Heart left ventricle (tissue), 16 donors: ENCODE measurements at regions of chr14 and their contacts with region 1.

Region 1: DNA sequence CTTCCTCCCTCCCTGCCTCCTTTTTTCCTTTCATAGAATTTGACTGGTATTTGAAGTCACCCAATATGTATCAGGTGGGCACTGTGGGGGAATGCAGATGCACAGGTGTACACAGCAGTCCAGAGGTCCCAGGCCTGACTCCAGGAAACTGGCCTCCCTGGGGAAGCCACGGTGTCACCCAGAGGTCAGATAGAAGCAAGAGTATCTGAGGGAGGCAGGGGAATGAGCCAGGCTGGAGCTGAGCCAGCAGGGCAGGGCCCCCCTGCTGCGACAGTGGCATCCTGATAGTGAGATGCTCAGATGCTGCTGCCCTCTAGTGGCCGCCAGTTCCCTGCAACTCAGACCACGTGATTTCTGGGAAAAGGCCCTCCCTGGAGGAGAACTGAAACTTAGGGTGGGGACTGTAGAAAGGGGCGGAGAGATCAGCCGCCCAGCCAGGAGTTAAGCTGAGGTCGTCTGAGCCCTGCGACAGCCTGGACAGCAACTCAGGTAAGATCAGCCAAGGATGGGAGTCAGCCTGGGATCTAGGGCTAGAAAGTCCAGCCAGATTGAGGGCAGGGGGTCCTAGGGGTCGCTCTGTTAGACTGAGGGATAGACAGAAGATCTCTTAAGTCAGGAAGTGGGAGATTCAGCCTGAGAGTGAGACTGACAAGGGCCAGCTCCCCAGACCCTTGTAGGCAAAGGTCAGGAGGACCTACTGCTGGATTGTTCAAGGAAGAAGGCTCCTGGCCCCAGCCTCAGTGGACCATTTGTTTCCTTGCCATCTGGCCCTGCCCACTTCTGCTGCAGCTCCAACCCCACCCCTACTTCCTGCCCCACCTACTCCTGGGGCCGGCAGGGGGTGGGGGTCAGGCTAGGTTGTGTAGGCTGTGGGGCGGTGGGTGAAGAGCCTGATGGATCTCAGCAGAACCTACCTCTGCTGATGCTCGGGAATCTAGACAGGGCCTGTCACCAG is at the start of gene IRF9:
- DNase-seq: peak; percentile 95 to 97 (median 96)
- ATAC-seq: peak; percentile 88 to 95 (median 94)
- H3K4me3 ChIP-seq: peak within 1 kb of the TSS; percentile 36 to 85 (median 72)
- H3K27ac ChIP-seq: peak within 1 kb of the TSS; percentile 82 to 100 (median 97)
- H3K4me1 ChIP-seq: peaks cover 0 to 54% (median 22%) of the 10 kb centered on the region in 12 donors
- H3K27me3 ChIP-seq: no peaks in the 10 kb centered on the region
- CTCF ChIP-seq: peak; percentile 86 to 98 (median 93)
- POLR2A ChIP-seq: peak in 1 of 2 donors; percentile 59
- total RNA-seq, gene IRF9: 23.4 to 169 (median 29.8) TPM

Region 2: DNA sequence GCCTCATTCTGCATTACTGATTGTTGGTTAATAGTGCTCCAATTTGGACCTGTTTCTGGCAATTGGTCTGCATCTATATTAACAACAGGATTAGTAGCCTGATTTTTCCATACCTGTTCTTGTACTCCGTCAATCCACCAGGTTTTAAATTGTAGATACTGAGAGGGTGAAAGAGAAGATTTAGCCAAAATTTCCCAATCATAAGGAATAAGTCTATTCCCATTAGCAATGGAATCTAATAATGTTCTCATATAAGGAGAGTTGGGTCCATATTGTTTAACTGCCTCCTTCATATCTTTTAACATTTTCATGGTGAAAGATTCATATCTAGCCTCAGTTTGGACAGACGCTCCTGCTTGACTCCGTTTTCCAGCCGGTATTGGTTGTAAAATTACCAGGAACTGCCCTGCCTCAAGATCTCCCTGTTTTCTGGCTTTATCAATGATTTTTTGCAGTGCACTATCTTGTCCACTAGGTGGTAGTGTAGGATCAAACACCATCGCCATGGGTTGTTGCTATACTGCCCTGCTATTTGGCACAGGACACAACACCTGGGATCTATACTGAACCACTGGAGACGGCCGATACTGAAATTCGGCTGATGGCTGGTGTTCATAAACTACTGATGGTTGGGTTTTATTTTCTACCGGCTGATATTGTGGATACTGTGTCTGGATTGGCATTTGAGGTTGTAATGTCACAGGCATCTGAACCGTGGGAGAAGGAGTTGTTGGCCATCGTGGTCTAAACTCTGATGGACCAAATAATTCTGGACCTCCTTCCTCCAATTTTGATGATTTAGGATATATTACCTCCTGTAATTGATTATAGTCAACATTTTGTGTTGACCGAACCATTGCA is 147.2 kb before region 1 on chr14:
- intact Hi-C with region 1: loop called in 1 of 10 experiments (anchors 10 kb)
- DNase-seq: peak in 3 of 5 donors; percentile 29 to 43 (median 35)
- ATAC-seq: peak; percentile 73 to 83 (median 82)
- H3K4me3 ChIP-seq: no peak overlapping the region
- H3K27ac ChIP-seq: no peak overlapping the region
- H3K4me1 ChIP-seq: peaks cover 0 to 10% (median 2%) of the 10 kb centered on the region in 12 donors
- H3K27me3 ChIP-seq: no peaks in the 10 kb centered on the region
- CTCF ChIP-seq: peak; percentile 85 to 97 (median 90)
- POLR2A ChIP-seq: no peak

Region 3: DNA sequence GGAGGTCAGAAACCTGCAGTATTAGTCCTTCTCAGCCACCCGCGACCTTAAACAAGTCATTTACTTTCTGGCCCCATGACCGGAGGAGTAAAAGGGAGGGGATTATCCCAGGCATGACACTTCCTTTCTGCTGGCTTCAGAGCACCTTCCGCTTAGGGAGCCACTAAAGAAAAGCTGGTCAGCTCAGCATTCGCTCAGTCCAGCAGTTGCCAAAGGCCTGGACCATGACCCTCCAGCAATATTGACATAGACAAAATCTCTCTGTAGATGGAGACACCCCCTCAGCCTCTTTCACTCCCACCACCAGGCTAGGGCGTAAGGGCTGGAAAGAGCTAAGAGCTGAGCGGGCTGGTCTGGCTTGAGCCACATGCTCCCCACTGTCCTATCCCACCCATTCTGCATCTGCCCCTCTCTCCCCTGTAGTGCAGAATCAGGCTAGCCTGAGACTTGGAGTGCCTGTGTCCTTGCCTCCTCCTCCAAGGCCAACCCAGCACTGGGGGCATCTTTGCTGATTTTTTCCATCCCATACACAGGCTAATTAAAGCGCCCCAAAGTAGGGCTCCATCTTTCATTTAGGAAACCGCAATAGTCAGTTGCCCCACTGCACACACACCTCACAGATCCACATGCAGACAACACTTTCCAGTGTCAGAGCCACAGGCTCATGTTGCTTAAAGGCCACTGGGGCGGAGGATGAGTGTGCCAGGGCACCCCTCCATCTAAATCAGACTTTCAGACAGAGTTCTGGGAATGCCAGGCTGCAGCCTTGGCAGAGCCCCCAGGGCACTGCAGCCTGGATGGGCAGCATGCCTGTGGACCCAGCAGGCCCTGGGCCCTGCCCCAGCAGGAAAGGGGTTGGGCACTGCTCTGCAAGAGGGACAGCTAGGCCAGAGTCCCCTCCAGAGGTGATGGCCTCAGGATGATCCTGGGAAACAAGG is 93.7 kb before region 1 on chr14:
- intact Hi-C with region 1: loop called in 1 of 10 experiments (anchors 10 kb)
- DNase-seq: peak in 1 of 5 donors; percentile 18
- ATAC-seq: peak in 1 of 4 donors; percentile 29
- H3K4me3 ChIP-seq: no peak overlapping the region
- H3K27ac ChIP-seq: no peak overlapping the region
- H3K4me1 ChIP-seq: peaks cover 0 to 6% (median 0%) of the 10 kb centered on the region in 12 donors
- H3K27me3 ChIP-seq: peaks cover 0 to 10% (median 0%) of the 10 kb centered on the region in 9 donors
- CTCF ChIP-seq: no peak
- POLR2A ChIP-seq: no peak

Region 4: GRCh38 chr14:24114536-24115450 is 46.3 kb before region 1 on chr14 and contains the starts of genes DCAF11 and NRL:
- intact Hi-C with region 1: loop called in 4 of 10 experiments (anchors 1 to 5 kb)
- DNase-seq: peak; percentile 99
- ATAC-seq: peak; percentile 93 to 95 (median 94)
- H3K4me3 ChIP-seq: peak within 1 kb of the TSS; percentile 48 to 79 (median 71)
- H3K27ac ChIP-seq: peak within 1 kb of the TSS; percentile 95 to 100 (median 97)
- H3K4me1 ChIP-seq: peaks cover 0 to 31% (median 18%) of the 10 kb centered on the region in 12 donors
- H3K27me3 ChIP-seq: no peaks in the 10 kb centered on the region
- CTCF ChIP-seq: peak in 2 of 12 donors; percentile 22 to 36
- POLR2A ChIP-seq: peak in 1 of 2 donors; percentile 9
- total RNA-seq, gene DCAF11: 55.1 to 117 (median 75.0) TPM
- total RNA-seq, gene NRL: 1.3 to 2.9 (median 2.1) TPM

Region 5: GRCh38 chr14:24141097-24141880 is 19.8 kb before region 1 on chr14 and contains the start of gene EMC9:
- intact Hi-C with region 1: no loop called
- DNase-seq: peak; percentile 100
- ATAC-seq: peak; percentile 90 to 96 (median 94)
- H3K4me3 ChIP-seq: peak within 1 kb of the TSS; percentile 64 to 95 (median 72)
- H3K27ac ChIP-seq: peak within 1 kb of the TSS; percentile 59 to 96 (median 90)
- H3K4me1 ChIP-seq: peaks cover 3 to 91% (median 44%) of the 10 kb centered on the region in 12 donors
- H3K27me3 ChIP-seq: no peaks in the 10 kb centered on the region
- CTCF ChIP-seq: peak; percentile 26 to 75 (median 57)
- POLR2A ChIP-seq: peak in 1 of 2 donors; percentile 94
- total RNA-seq, gene EMC9: 9.6 to 18.7 (median 13.8) TPM

Region 6: DNA sequence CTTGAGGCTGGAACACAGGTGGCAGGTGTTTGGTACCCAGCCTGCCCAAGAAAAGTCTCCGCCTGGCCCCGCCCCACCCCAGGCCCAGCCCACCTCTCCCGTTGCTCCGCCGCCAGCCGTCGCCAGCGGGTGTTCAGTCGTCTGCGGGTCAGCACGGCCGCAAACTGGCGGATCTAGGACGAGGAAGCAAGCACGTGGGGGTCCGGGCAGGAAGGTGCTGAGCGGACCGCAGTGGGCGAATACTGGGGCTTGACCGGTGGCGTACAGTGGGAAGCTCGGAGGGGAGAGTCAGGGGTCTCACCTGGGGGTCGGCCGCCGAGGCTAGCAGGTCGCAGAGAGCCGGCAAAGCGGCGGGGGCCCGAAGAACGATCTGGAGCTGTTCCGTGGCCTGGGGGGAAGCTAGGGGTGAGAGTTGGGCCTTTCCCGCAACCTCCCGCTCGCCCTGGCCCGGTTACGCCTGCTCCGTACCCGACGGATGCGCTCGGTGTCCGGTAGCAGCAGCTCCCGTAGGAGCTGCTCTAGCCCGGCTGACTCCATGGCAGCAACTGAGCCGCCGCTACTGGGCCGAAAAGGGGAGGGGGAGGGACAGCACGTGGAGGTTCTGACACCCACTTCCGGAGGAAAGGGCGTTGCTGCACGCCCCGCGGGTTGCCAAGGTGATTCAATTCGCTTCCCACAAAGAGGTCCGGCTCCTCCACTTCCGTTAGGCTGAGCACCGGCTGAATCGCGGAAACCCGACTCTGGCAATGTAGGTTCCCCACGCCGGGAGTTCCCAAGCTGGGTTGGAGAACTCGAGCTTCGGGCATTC is 27.3 kb after region 1 on chr14 and contains the start of gene IPO4:
- intact Hi-C with region 1: loop called in 1 of 10 experiments (anchors 1 kb)
- DNase-seq: peak; percentile 96 to 98 (median 97)
- ATAC-seq: peak; percentile 92 to 98 (median 94)
- H3K4me3 ChIP-seq: peak within 1 kb of the TSS; percentile 48 to 83 (median 69)
- H3K27ac ChIP-seq: peak within 1 kb of the TSS in 11 of 12 donors; percentile 41 to 80 (median 67)
- H3K4me1 ChIP-seq: peaks cover 0 to 24% (median 14%) of the 10 kb centered on the region in 12 donors
- H3K27me3 ChIP-seq: no peaks in the 10 kb centered on the region
- CTCF ChIP-seq: no peak
- POLR2A ChIP-seq: peak in 1 of 2 donors; percentile 45
- total RNA-seq, gene IPO4: 9.1 to 25.6 (median 17.2) TPM

Region 7: DNA sequence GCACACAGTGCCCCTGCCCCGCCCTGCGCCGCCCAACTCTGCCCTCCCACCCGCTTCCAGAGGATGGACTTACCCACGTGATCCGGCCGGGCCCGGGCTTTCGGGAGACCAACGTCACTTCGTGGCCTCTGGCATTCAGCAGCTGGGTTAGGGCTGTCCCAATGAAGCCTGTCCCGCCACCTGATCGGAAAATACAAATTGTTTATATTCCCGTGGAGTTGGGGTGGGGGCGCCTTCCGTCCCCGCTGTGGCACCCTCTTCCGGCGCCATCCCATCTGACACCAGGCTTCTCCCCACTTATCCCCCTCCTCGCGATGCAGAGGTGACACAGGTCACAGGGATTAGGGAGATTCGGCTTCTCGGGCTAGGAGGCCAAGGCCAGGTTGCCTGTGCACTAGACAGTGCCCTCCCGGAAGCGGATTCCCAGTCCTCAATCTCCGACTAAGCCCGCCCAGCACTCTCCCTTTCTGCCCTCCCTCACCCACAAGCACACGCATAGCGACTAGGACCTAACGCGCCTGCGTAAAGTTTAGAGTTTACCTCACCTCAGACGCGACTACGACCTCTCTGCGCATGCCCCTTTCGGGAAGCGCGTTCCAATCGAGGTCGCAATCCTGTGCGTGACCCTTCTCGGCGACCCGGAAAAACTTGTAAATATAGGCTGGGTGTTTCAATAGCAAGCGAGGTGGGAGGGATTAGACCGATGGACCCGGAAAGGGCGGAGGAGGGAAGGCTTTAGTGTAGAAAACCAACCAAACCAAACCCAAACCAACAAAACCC is 281.3 kb after region 1 on chr14 and contains the start of gene SDR39U1:
- intact Hi-C with region 1: no loop called
- DNase-seq: peak; percentile 97 to 98 (median 98)
- ATAC-seq: peak; percentile 93 to 96 (median 95)
- H3K4me3 ChIP-seq: peak within 1 kb of the TSS; percentile 24 to 89 (median 74)
- H3K27ac ChIP-seq: peak within 1 kb of the TSS; percentile 94 to 100 (median 98)
- H3K4me1 ChIP-seq: peaks cover 0 to 49% (median 38%) of the 10 kb centered on the region in 12 donors
- H3K27me3 ChIP-seq: no peaks in the 10 kb centered on the region
- CTCF ChIP-seq: peak in 2 of 12 donors; percentile 11 to 18
- POLR2A ChIP-seq: peak; percentile 34 to 90
- total RNA-seq, gene SDR39U1: 58.6 to 74.6 (median 60.5) TPM